ENCODE measurements at regions of chr5 and their contacts with region 1.

Region 1: DNA sequence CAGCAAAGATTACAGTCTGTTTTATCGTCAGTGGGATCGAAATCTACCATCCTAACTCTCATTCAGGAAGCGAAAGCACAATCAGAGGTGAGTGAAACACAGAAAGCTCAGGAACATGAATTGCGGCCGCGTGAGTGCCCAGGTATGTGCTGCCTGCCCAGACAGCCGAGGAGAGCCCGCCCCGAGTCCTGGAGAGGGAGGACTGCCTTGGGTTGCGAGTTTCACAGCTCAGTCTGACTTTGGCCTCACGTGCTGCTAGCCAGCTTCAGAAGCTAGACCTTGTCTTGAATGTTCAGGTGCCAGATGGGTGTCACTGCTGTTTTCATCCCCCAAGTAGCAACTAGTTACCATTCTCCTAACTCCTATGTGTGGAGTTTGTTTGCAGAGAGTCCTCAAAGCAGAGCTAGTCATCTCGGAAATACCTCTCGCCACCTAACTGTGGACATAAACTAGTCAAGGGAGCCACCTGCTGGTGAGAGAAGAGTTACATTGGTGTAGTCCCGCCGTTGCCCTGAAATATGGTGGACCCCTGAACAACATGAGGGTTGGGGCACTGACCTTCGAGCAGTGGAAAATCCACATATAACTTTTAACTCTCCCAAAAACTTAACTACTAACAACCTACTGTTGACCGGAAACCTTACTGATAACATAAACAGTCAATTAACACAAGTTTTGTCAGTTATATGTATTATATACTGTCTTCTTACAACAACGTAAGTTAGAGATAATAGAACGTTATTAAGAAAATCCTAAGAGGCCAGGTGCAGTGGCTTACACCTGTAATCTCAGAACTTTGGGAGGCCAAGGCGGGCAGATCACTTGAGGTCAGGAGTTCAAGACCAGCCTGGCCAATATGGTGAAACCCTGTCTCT is 80.9 kb downstream of the GOLPH3 start:
- DNase-seq: peak; percentile 77
- ATAC-seq: peak; percentile 94
- H3K4me3 Mint-ChIP-seq: no peak overlapping the region
- H3K27ac Mint-ChIP-seq: 0 out of 2 replicates have a peak overlapping the region, but pooled peaks have one; percentile 41
- H3K4me1 Mint-ChIP-seq: peaks cover 5% of the 10 kb centered on the region
- H3K27me3 Mint-ChIP-seq: no peaks in the 10 kb centered on the region
- CTCF ChIP-seq: peak; percentile 58

Region 2: DNA sequence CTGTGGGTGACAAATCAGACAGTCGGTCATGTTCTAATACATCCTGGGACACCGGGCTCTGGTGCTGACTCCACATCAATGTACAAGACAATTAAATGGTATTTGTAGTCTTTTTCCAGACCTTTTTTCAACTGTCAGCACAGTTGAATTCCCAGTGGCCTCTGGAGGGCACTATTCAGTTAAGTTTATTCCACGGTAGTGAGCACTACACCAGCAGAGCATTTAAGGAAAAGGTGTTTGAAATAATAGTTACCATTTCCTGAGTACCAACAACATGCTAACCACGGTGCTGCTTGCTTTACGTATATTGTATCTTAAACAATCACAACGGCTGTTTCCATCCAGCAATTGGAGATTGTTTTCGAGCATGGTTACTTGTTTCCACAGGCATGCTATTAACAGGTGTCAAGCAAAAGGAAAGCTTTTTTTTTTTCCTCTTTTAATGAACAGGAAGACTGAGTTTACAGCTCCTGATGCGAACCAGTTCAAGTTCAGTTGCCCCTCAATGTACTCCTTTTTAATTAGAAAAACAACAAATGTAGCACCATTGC is 267.6 kb before region 1 on chr5:
- CTCF ChIA-PET with region 1: interaction called, 46 read pairs
- POLR2A ChIA-PET with region 1: no interaction called
- DNase-seq: peak; percentile 52
- ATAC-seq: peak; percentile 95
- H3K4me3 Mint-ChIP-seq: no peak overlapping the region
- H3K27ac Mint-ChIP-seq: no peak overlapping the region
- H3K4me1 Mint-ChIP-seq: 0 out of 2 replicates have a peak, but pooled peaks cover 4% of the 10 kb centered on the region
- H3K27me3 Mint-ChIP-seq: no peaks in the 10 kb centered on the region
- CTCF ChIP-seq: peak; percentile 23; the same call in 1 of the 2 replicates

Region 3: DNA sequence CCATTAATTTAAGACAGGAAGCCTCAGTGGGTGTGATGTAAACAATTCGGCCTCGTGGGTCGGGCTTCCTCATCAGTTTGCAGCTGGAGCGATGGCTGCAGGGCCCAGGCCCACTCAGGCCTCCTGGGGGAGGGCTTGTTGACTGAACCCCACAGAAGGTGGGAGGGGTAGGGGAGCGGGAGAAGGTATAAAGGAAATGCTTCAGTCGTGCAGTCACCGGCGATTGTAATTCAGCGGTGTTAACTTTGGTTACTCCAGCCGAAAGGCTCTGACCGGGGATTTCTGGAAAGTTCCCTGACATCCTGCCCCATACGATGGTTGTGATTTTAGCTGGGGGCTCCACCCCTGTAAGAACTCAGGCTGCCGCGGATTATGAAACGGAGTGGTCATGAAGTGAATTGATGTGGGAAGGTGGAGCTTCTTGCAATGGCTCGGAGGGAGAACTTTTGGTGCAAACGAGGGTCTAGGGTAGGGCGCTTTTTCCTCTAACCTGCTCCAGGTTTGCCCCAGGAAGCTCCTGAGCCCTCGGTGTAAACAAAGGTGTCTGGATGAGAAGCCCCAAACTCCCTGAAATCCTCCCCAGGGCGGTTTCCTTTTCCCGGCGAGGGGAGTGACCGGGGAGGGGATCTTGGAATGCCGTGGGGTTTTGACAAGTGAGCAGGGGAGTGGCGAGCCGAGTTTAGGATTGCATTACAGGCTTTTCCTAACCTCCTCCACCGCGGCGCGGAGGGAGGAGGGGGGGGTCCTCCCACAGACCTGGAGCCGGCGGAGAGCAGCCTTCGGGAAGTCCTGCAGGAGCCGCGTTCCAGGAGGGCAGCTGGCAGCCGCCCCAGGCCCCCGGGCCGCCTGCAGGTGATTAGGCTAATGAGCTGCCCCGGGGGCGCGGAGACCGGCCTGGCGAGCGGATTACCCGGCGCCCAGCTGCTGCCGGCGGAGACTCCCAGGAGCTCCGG is 238.7 kb before region 1 on chr5:
- CTCF ChIA-PET with region 1: interaction called, 24 read pairs
- POLR2A ChIA-PET with region 1: interaction called, 4 read pairs
- DNase-seq: peak; percentile 66
- ATAC-seq: peak; percentile 64
- H3K4me3 Mint-ChIP-seq: peak overlapping the region; percentile 95
- H3K27ac Mint-ChIP-seq: peak overlapping the region; percentile 98
- H3K4me1 Mint-ChIP-seq: peaks cover 41% of the 10 kb centered on the region
- H3K27me3 Mint-ChIP-seq: no peaks in the 10 kb centered on the region
- CTCF ChIP-seq: no peak

Region 4: DNA sequence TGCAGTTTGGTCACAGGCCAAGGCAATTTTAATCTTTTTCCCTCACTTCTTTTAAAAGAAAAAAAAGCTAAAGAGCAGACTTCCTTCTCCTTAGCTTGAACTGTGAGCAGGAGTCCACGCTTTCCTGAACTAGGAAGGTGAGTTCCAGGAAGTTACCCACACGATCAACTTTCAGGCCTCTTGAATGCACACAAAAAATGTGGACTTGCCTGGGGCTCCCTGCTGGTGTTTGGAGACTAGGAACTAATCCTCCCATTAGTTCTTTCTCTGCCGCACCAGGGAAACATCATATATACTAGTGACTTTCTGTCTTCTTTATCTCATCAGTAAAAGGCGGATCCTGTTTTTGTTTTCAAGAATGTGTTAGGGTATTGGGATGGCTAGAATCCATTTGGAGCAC is 159.0 kb before region 1 on chr5:
- CTCF ChIA-PET with region 1: interaction called, 11 read pairs
- POLR2A ChIA-PET with region 1: no interaction called
- DNase-seq: no peak
- ATAC-seq: no peak
- H3K4me3 Mint-ChIP-seq: no peak overlapping the region
- H3K27ac Mint-ChIP-seq: 0 out of 2 replicates have a peak overlapping the region, but pooled peaks have one; percentile 9
- H3K4me1 Mint-ChIP-seq: peaks cover 7% of the 10 kb centered on the region
- H3K27me3 Mint-ChIP-seq: no peaks in the 10 kb centered on the region; the same call in 1 of the 2 replicates
- CTCF ChIP-seq: no peak

Region 5: GRCh38 chr5:32020271-32020670 is 72.9 kb before region 1 on chr5:
- CTCF ChIA-PET with region 1: no interaction called
- POLR2A ChIA-PET with region 1: no interaction called
- DNase-seq: no peak
- ATAC-seq: no peak
- H3K4me3 Mint-ChIP-seq: no peak overlapping the region
- H3K27ac Mint-ChIP-seq: no peak overlapping the region
- H3K4me1 Mint-ChIP-seq: peaks cover 43% of the 10 kb centered on the region
- H3K27me3 Mint-ChIP-seq: no peaks in the 10 kb centered on the region
- CTCF ChIP-seq: no peak

Region 6: DNA sequence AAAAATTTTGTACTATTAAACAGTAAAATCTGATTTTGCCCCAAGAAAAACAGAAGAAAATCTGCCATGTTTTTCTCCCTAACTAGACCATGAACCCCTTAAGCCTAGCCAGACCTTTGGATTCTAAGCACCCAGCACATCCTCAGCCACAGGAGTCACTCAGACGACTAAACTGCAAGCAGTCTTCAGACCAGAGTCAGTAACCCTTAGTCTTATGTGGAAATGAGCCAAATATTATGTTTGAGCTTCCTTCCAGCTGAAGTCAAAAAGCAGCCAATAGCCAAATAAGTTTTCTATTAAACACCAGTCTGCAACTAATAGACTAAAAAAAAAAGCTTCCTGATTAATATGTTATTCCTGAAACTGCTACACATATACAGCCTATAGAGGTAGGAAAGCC is 33.5 kb after region 1 on chr5:
- CTCF ChIA-PET with region 1: interaction called, 10 read pairs
- POLR2A ChIA-PET with region 1: no interaction called
- DNase-seq: no peak
- ATAC-seq: no peak
- H3K4me3 Mint-ChIP-seq: no peak overlapping the region
- H3K27ac Mint-ChIP-seq: 0 out of 2 replicates have a peak overlapping the region, but pooled peaks have one; percentile 24
- H3K4me1 Mint-ChIP-seq: peaks cover 36% of the 10 kb centered on the region
- H3K27me3 Mint-ChIP-seq: no peaks in the 10 kb centered on the region
- CTCF ChIP-seq: no peak

Measured in WTC11 (cell line).